H1 (cell line): ENCODE measurements at regions of chr12 and their contacts with region 1.

Region 1: DNA sequence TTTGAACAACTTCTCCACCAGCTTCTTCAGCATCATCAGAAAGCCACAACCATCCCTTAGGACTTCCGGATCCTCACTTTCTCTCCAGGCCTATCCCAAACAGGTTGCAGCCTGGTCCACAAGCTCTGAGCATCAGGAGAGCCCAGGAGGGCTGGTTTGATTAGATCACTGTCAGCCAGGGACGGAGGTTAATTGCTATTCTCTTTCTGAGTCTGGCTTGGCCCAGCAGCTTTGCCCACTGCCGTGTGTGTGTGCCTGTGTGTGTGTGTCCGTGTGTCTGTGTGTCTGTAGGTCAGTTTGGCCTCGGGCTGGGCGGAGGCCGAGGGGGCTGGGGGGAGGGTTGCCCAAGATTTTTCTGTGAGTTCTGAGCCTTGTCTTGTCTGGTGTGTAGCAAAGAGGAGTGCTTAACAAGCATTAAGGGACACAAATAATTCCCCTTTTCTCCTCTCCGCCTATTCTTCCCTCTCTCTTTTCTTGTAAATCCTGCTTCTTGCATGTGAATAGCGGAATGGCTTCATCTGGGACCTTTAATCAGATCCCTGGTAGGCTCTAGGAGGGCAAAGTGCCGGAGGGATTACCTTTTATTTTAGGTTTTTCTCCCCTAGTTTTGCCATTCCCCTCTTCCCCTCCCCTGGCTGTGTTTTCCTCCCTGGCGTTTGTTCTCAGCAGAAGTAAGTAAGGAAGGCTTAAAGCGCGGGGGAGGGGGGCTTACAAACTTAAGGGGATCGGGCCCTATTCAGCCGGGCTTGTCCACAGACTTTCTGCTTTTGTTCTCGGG is 138.2 kb upstream of the LHX5 start:
- DNase-seq: peak; percentile 61 to 86
- H3K4me3 ChIP-seq: peak overlapping the region; percentile 34 to 63 (median 46); a peak in 6 of 8 replicates
- H3K27ac ChIP-seq: no peak overlapping the region
- H3K4me1 ChIP-seq: peaks cover 4 to 25% (median 17%) of the 10 kb centered on the region in 4 experiments
- H3K27me3 ChIP-seq: peaks cover 0 to 9% (median 1%) of the 10 kb centered on the region in 4 experiments; a peak in 3 of 7 replicates
- CTCF ChIP-seq: no peak
- EP300 ChIP-seq: peak in 1 of 2 experiments; percentile 40; a peak in 1 of 3 replicates
- POLR2A ChIP-seq: no peak
- RAD21 ChIP-seq: peak in 1 of 2 experiments; percentile 2; a peak in 1 of 4 replicates

Region 2: DNA sequence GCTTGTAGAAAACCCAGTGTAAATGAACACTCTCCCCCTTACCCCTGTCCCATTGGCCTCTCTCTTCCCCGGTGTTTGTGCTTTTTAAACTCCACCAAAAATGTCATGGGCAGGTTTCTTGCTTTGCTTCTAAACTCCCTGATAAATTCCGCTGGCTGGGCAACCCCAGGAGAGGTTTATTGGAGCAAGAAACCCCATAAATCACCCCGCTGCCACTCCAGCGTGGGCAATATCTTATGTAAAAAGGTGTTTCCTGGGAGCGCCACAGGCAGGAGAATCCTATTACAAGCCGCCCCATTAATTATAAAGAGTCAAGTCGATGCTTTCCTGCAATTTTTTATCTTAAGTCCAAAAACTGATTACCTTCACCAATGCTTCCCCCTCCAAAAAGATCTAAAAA is 161.0 kb before region 1 on chr12:
- CTCF ChIA-PET with region 1: no interaction called
- POLR2A ChIA-PET with region 1: no interaction called
- DNase-seq: no peak
- H3K4me3 ChIP-seq: no peak overlapping the region
- H3K27ac ChIP-seq: no peak overlapping the region
- H3K4me1 ChIP-seq: no peaks in the 10 kb centered on the region
- H3K27me3 ChIP-seq: no peaks in the 10 kb centered on the region
- CTCF ChIP-seq: no peak
- EP300 ChIP-seq: no peak
- POLR2A ChIP-seq: no peak
- RAD21 ChIP-seq: no peak

Region 3: DNA sequence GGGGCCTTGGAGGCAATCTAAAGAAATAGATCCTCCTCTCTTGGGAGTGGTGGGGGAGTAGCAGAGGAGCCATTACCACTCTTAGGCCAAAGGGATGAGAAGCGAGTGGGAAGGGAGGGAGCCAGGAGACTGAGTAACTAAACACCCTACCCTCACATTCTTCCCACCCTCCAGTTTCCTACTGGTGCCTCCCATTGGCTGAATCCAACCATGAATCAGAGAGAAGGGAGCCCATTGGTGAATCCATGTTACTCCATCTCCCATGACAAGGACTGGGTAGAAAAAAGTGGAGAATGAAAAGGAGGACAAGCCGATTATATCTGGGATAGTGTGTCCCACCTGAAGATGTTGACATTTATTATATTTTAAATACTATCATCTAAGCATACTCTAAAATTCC is 61.4 kb before region 1 on chr12:
- CTCF ChIA-PET with region 1: no interaction called
- POLR2A ChIA-PET with region 1: no interaction called
- DNase-seq: no peak
- H3K4me3 ChIP-seq: no peak overlapping the region
- H3K27ac ChIP-seq: no peak overlapping the region
- H3K4me1 ChIP-seq: peaks cover 0 to 3% (median 1%) of the 10 kb centered on the region in 4 experiments; a peak in 1 of 7 replicates
- H3K27me3 ChIP-seq: 0 out of 7 replicates have a peak, but pooled peaks cover 0 to 4% (median 0%) of the 10 kb centered on the region in 4 experiments
- CTCF ChIP-seq: no peak
- EP300 ChIP-seq: no peak
- POLR2A ChIP-seq: no peak
- RAD21 ChIP-seq: no peak

Region 4: GRCh38 chr12:113568021-113568420 is 41.9 kb before region 1 on chr12:
- CTCF ChIA-PET with region 1: no interaction called
- POLR2A ChIA-PET with region 1: no interaction called
- DNase-seq: no peak
- H3K4me3 ChIP-seq: no peak overlapping the region
- H3K27ac ChIP-seq: no peak overlapping the region
- H3K4me1 ChIP-seq: no peaks in the 10 kb centered on the region
- H3K27me3 ChIP-seq: 0 out of 7 replicates have a peak, but pooled peaks cover 0 to 3% (median 0%) of the 10 kb centered on the region in 4 experiments
- CTCF ChIP-seq: no peak
- EP300 ChIP-seq: no peak
- POLR2A ChIP-seq: no peak
- RAD21 ChIP-seq: no peak; a peak in 1 of 4 replicates

Region 5: GRCh38 chr12:113591480-113591974 is 18.4 kb before region 1 on chr12:
- CTCF ChIA-PET with region 1: interaction called, 3 read pairs
- POLR2A ChIA-PET with region 1: interaction called, 11 read pairs
- DNase-seq: peak in 1 of 2 experiments; percentile 62
- H3K4me3 ChIP-seq: peak overlapping the region; percentile 17 to 60 (median 24); a peak in 7 of 8 replicates
- H3K27ac ChIP-seq: no peak overlapping the region
- H3K4me1 ChIP-seq: peaks cover 6 to 21% (median 17%) of the 10 kb centered on the region in 4 experiments; a peak in 5 of 7 replicates
- H3K27me3 ChIP-seq: peaks cover 0 to 9% (median 1%) of the 10 kb centered on the region in 4 experiments; a peak in 4 of 7 replicates
- CTCF ChIP-seq: no peak
- EP300 ChIP-seq: no peak
- POLR2A ChIP-seq: no peak
- RAD21 ChIP-seq: no peak

Region 6: GRCh38 chr12:113683574-113684384 is 73.9 kb after region 1 on chr12:
- CTCF ChIA-PET with region 1: no interaction called
- POLR2A ChIA-PET with region 1: no interaction called
- DNase-seq: no peak
- H3K4me3 ChIP-seq: no peak overlapping the region
- H3K27ac ChIP-seq: no peak overlapping the region
- H3K4me1 ChIP-seq: peaks cover 0 to 8% (median 0%) of the 10 kb centered on the region in 4 experiments; a peak in 1 of 7 replicates
- H3K27me3 ChIP-seq: no peaks in the 10 kb centered on the region
- CTCF ChIP-seq: no peak
- EP300 ChIP-seq: no peak
- POLR2A ChIP-seq: no peak
- RAD21 ChIP-seq: no peak